Naive thymus-derived CD8-positive, alpha-beta T cell (primary cell): ENCODE measurements at regions of chr7 and their contacts with region 1.

Region 1: GRCh38 chr7:149195180-149196150 is at the start of gene ZNF282:
- DNase-seq: peak; percentile 42 to 79 (median 60)
- ATAC-seq: peak; percentile 85 to 86
- H3K4me3 Mint-ChIP-seq: peak within 1 kb of the TSS; percentile 83 to 93 (median 91)
- H3K27ac Mint-ChIP-seq: peak within 1 kb of the TSS; percentile 81 to 95 (median 89)
- H3K4me1 Mint-ChIP-seq: peaks cover 13 to 45% (median 35%) of the 10 kb centered on the region in 4 donors
- H3K27me3 Mint-ChIP-seq: peaks cover 0 to 2% (median 0%) of the 10 kb centered on the region in 5 donors
- polyA plus RNA-seq, gene ZNF282: 0.66 to 1.1 (median 0.90) TPM

Region 2: GRCh38 chr7:149125863-149126661 is 69.4 kb before region 1 on chr7 and contains the start of gene ZNF425:
- POLR2A ChIA-PET with region 1: interaction called, 10 read pairs
- DNase-seq: peak; percentile 87 to 99 (median 93)
- ATAC-seq: peak; percentile 85 to 86
- H3K4me3 Mint-ChIP-seq: peak within 1 kb of the TSS; percentile 89 to 100 (median 99)
- H3K27ac Mint-ChIP-seq: peak within 1 kb of the TSS; percentile 92 to 100 (median 98)
- H3K4me1 Mint-ChIP-seq: peaks cover 21 to 38% (median 25%) of the 10 kb centered on the region in 4 donors
- H3K27me3 Mint-ChIP-seq: no peaks in the 10 kb centered on the region
- polyA plus RNA-seq, gene ZNF425: 0.65 to 1.8 (median 1.0) TPM